ENCODE measurements at regions of chr1 and their contacts with region 1.

Region 1: DNA sequence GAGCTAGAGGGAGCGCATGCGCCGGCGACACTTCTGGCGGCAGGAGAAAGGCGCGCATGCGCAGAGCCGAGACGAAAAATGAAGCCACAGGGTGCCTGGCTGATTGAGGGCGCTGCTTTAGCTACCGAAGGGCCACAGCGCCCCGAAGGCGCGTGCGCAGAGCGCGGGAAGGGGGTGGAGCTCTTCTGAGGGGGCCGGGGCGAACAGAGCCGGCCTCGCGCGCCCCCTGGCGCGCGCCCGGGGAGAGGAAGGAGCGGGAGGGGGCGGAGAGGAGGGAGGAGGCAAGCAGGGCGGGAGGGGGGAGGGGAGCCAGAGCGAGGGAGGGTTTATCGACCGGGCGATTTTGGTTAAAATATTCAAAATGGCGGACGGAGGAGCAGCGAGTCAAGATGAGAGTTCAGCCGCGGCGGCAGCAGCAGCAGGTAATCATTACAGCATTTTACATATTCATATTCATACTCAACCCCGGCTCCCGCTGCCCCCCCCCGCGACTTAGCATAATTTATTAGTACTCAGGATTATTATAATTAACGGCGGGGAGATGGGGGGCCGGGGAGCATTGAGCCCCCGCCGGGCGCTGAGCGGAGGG is at the start of gene POU2F1:
- DNase-seq: peak; percentile 99
- H3K4me3 Mint-ChIP-seq: peak within 1 kb of the TSS; percentile 99
- H3K27ac Mint-ChIP-seq: peak within 1 kb of the TSS; percentile 99
- H3K4me1 Mint-ChIP-seq: peaks cover 37% of the 10 kb centered on the region
- H3K27me3 Mint-ChIP-seq: peaks cover 2% of the 10 kb centered on the region
- total RNA-seq, gene POU2F1: 17.6 to 19.4 TPM

Region 2: GRCh38 chr1:166975361-166976129 is 245.1 kb before region 1 on chr1 and contains the start of gene ILDR2:
- CTCF ChIA-PET with region 1: no interaction called
- intact Hi-C with region 1: loop called (anchors 1 kb)
- DNase-seq: peak; percentile 84
- H3K4me3 Mint-ChIP-seq: peak within 1 kb of the TSS; percentile 91
- H3K27ac Mint-ChIP-seq: peak within 1 kb of the TSS; percentile 90
- H3K4me1 Mint-ChIP-seq: peaks cover 36% of the 10 kb centered on the region
- H3K27me3 Mint-ChIP-seq: peaks cover 10% of the 10 kb centered on the region
- total RNA-seq, gene ILDR2: 9.1 to 10.5 TPM

Region 3: GRCh38 chr1:167105271-167106118 is 115.1 kb before region 1 on chr1:
- CTCF ChIA-PET with region 1: interaction called, 3 read pairs
- intact Hi-C with region 1: loop called (anchors 1 kb)
- DNase-seq: no peak
- H3K4me3 Mint-ChIP-seq: no peak overlapping the region
- H3K27ac Mint-ChIP-seq: peak overlapping the region; percentile 42
- H3K4me1 Mint-ChIP-seq: peaks cover 56% of the 10 kb centered on the region
- H3K27me3 Mint-ChIP-seq: no peaks in the 10 kb centered on the region

Region 4: DNA sequence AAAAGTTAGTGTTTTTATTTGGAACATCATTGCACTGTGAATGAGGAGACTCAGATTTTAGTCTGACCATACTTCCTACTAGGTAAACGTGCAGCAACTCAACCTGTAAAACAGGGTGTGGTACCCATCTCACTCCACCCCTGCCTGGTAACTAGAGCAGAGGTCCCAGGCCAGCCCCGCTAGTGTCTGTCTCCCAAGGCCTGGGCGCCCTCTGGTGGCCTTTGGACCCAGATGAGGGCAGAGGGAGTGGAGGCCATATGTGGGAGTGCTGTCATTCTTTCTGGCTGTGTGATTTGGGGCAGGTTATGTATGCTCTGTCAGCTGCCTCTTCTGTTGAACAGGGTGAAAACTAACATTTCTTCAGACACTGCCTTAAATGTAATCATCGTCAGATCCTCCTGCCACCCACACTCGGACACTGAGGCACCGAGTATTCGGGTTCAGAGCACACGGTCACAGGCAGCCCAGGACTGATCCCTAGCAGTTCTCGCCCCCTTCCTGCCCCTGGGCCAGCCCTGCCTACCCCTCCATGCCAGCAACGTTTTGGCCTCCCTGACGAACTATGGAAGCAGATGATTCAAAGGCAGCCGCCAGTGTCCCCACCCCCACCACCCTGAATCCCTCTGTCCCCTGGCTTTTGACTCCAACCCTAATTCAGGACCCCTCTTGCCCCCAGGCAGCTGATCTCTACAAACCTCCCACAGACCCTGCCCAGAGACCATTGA is 221.7 kb after region 1 on chr1:
- CTCF ChIA-PET with region 1: interaction called, 5 read pairs
- intact Hi-C with region 1: loop called (anchors 1 kb)
- DNase-seq: peak; percentile 93
- H3K4me3 Mint-ChIP-seq: no peak overlapping the region
- H3K27ac Mint-ChIP-seq: peak overlapping the region; percentile 79
- H3K4me1 Mint-ChIP-seq: peaks cover 74% of the 10 kb centered on the region
- H3K27me3 Mint-ChIP-seq: no peaks in the 10 kb centered on the region

Region 5: GRCh38 chr1:167533851-167534300 is 313.2 kb after region 1 on chr1:
- CTCF ChIA-PET with region 1: interaction called, 3 read pairs
- intact Hi-C with region 1: loop called (anchors 2 kb)
- DNase-seq: peak; percentile 78
- H3K4me3 Mint-ChIP-seq: no peak overlapping the region
- H3K27ac Mint-ChIP-seq: no peak overlapping the region
- H3K4me1 Mint-ChIP-seq: peaks cover 4% of the 10 kb centered on the region
- H3K27me3 Mint-ChIP-seq: peaks cover 2% of the 10 kb centered on the region

Region 6: GRCh38 chr1:167715157-167715999 is 494.7 kb after region 1 on chr1:
- CTCF ChIA-PET with region 1: no interaction called
- intact Hi-C with region 1: loop called (anchors 1 kb)
- DNase-seq: peak; percentile 95
- H3K4me3 Mint-ChIP-seq: peak overlapping the region; percentile 79
- H3K27ac Mint-ChIP-seq: peak overlapping the region; percentile 92
- H3K4me1 Mint-ChIP-seq: peaks cover 28% of the 10 kb centered on the region
- H3K27me3 Mint-ChIP-seq: peaks cover 5% of the 10 kb centered on the region

Measured in activated naive CD4-positive, alpha-beta T cell treated with anti-CD3 and anti-CD28 coated beads for 36 hours (primary cell).